H1 (cell line): ENCODE measurements at regions of chr17 and their contacts with region 1.

Region 1: DNA sequence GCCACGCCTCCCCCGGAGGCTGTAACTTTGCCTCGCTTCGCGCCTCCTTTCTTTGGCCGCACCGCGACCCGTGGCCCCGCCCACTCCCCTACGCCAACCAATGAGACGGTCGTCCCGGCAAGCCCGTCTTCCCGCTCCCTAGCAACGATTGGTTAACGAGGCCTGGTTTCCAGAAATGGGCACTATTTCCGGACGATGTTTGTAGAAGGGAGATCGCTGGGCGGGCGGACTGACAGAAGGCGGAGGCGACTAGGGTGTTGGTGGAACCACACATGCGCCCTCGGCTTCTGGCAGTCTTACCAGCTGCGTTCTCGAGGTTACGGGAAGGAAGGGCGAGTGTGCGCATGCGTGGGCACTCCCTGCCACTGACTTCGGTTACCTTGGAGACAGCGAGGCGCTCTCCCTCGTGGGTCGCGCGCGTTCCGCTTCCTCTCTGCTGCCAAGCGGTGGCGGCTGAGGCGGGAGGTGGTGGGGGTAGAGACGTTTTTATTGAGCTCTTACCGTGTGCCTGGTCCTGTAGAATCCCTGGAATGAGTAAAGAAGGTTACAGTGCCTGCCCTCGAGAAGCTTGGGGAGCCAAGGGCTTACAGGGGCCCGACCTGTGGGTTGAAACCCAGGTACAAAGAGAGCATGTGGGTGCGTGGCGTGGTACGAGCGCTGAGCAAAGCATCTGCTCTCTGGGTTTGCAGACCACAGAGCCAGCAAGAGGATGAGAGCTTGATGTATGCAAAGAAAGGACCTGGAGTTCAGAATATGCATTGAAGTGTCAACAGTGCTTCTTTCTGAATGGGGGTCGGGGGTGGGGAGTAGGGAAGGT is 500 bp upstream of the MAP3K14 start:
- DNase-seq: peak; percentile 99
- H3K4me3 ChIP-seq: peak overlapping the region; percentile 49 to 84 (median 76)
- H3K27ac ChIP-seq: no peak overlapping the region; the same call in 1 of the 2 replicates
- H3K4me1 ChIP-seq: peaks cover 0 to 5% (median 3%) of the 10 kb centered on the region in 4 experiments; a peak in 6 of 7 replicates
- H3K27me3 ChIP-seq: peaks cover 0 to 2% (median 0%) of the 10 kb centered on the region in 4 experiments; a peak in 3 of 7 replicates
- CTCF ChIP-seq: no peak
- EP300 ChIP-seq: no peak
- POLR2A ChIP-seq: 0 out of 3 replicates have a peak, but pooled peaks of 1 of the 2 experiments have one; percentile 14
- RAD21 ChIP-seq: no peak; a peak in 1 of 4 replicates

Region 2: DNA sequence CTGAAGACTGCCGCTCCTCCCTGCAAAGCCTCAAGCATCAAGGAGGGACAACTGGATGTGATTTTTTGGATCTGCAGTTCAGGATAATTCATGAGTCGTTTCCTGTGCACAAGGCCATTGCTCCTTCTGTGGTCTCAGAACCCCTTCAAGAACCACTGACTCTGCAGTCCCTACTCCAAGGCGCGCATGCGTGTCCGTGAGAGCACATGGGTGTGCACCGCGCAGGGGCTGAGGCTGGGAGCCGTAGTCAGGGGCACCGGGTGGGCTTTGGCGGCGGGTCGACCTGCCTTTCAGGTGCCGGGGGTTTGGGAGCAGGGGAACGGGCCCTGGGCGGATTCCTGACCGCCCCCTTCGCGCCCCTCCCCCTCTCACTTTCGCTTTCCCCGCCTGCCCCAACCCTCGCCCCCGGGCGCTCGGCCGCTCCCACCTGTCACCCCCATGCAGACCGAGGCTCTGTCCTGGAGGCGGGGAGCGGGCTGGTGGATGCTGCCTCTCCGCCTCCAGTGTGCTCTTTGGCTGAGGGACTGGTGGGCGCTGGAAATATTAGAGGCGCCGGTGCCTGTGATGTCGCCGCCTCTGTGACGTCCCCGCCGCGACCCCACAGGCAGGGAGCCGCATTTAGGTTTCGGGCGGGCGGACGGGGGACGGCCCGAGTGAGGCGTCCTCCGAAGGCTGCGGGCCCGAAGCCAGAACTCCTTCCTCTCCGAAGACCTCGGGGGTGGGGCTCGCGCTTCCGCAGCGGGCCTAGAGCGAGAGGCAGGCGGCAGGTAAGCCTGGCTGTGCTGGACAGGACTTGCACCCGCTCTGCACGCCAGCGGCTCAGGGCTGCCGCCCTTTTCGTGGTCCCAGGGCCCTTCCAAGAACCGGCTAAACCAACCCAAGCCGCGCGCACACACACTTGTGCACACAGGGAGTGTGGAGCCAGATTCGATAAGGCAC is 55.5 kb before region 1 on chr17 and contains the start of gene SPATA32:
- CTCF ChIA-PET with region 1: no interaction called
- POLR2A ChIA-PET with region 1: no interaction called
- DNase-seq: peak in 1 of 2 experiments; percentile 83
- H3K4me3 ChIP-seq: peak within 1 kb of the TSS; percentile 52 to 69 (median 60)
- H3K27ac ChIP-seq: 0 out of 2 replicates have a peak within 1 kb of the TSS, but pooled peaks have one; percentile 40
- H3K4me1 ChIP-seq: peaks cover 4 to 14% (median 8%) of the 10 kb centered on the region in 4 experiments
- H3K27me3 ChIP-seq: peaks cover 0 to 5% (median 2%) of the 10 kb centered on the region in 4 experiments; a peak in 3 of 7 replicates
- CTCF ChIP-seq: no peak
- EP300 ChIP-seq: 0 out of 3 replicates have a peak, but pooled peaks of 1 of the 2 experiments have one; percentile 31
- POLR2A ChIP-seq: peak in 1 of 2 experiments; percentile 15; a peak in 1 of 3 replicates
- RAD21 ChIP-seq: no peak
- total RNA-seq, gene SPATA32: not detected in 2 replicates

Region 3: GRCh38 chr17:45299339-45299738 is 18.0 kb before region 1 on chr17:
- CTCF ChIA-PET with region 1: interaction called, 14 read pairs
- POLR2A ChIA-PET with region 1: interaction called, 10 read pairs
- DNase-seq: no peak
- H3K4me3 ChIP-seq: no peak overlapping the region
- H3K27ac ChIP-seq: no peak overlapping the region
- H3K4me1 ChIP-seq: no peaks in the 10 kb centered on the region
- H3K27me3 ChIP-seq: no peaks in the 10 kb centered on the region
- CTCF ChIP-seq: no peak
- EP300 ChIP-seq: no peak
- POLR2A ChIP-seq: no peak
- RAD21 ChIP-seq: no peak